ENCODE measurements at regions of chr7 and their contacts with region 1.

Region 1: GRCh38 chr7:100586266-100587025 is at the start of gene FBXO24:
- DNase-seq: peak; percentile 100
- ATAC-seq: peak; percentile 84
- H3K4me3 Mint-ChIP-seq: peak within 1 kb of the TSS; percentile 98
- H3K27ac Mint-ChIP-seq: peak within 1 kb of the TSS; percentile 97
- H3K4me1 Mint-ChIP-seq: peaks cover 23% of the 10 kb centered on the region
- H3K27me3 Mint-ChIP-seq: peaks cover 7% of the 10 kb centered on the region
- total RNA-seq, gene FBXO24: 0.80 to 1.3 TPM

Region 2: DNA sequence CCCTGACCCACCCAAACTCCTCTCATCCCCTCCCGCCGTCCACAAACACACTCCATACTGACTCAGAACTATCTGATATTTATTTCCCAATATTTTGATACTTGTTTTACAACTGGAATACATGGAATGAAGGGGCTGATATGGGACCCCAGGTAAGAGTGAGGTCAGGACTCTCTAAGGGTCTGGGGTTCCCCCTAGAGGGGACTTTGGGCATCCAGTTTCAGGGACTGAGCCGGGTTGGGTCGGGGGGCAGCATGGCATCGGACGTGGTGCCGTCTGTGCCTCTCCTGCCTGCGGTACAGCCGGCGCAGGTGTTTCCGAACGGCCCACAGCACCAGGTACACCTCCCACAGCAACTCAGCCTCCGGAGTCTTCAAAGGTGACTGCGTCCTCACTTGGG is 129.9 kb before region 1 on chr7:
- CTCF ChIA-PET with region 1: no interaction called
- DNase-seq: no peak
- ATAC-seq: no peak
- H3K4me3 Mint-ChIP-seq: no peak overlapping the region
- H3K27ac Mint-ChIP-seq: no peak overlapping the region
- H3K4me1 Mint-ChIP-seq: peaks cover 6% of the 10 kb centered on the region
- H3K27me3 Mint-ChIP-seq: no peaks in the 10 kb centered on the region

Region 3: DNA sequence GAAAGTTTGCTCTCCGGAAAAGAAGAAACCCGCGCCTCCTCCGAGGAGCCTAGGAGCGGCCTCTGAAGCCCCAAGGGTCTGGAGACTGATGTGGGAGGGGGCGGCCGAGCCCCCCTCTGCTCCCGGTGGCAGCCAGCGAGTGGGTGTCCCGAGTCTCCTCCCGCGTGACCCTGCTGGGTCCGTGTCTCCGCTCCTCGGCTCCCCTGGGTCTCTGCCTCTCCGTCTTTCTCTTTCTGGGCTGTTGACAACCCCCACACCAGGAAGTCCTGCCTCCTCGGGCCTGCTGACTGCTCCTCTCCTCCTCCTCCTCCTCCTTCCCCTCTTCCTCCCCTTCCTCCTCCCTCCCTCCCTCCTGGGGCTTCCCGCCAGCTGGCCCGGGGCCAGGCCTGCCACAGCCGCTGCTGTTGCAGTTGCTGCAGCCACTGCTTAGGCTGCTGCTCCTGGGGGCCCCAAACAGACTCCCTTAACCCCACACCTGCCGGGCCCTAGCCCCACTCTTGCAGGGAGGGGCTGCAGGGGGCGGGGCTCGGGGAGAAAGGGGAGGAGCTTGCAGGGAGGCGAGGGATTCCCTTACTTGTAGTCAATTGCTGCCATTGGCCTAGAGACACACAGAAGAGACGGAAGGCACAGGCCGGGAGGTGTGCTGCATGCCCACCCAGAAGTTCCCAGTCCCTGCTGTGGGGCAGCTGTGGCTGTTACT is 107.3 kb before region 1 on chr7 and contains the start of gene TSC22D4:
- CTCF ChIA-PET with region 1: interaction called, 16 read pairs
- DNase-seq: peak; percentile 97
- ATAC-seq: peak; percentile 81
- H3K4me3 Mint-ChIP-seq: peak within 1 kb of the TSS; percentile 95
- H3K27ac Mint-ChIP-seq: peak within 1 kb of the TSS; percentile 90
- H3K4me1 Mint-ChIP-seq: peaks cover 38% of the 10 kb centered on the region
- H3K27me3 Mint-ChIP-seq: no peaks in the 10 kb centered on the region
- total RNA-seq, gene TSC22D4: 128 to 144 TPM

Region 4: GRCh38 chr7:100563809-100564400 is 22.5 kb before region 1 on chr7:
- CTCF ChIA-PET with region 1: interaction called, 154 read pairs
- DNase-seq: peak; percentile 87
- ATAC-seq: peak; percentile 62
- H3K4me3 Mint-ChIP-seq: no peak overlapping the region
- H3K27ac Mint-ChIP-seq: peak overlapping the region; percentile 44
- H3K4me1 Mint-ChIP-seq: peaks cover 31% of the 10 kb centered on the region
- H3K27me3 Mint-ChIP-seq: no peaks in the 10 kb centered on the region

Region 5: GRCh38 chr7:100604028-100604975 is 17.9 kb after region 1 on chr7:
- CTCF ChIA-PET with region 1: interaction called, 20 read pairs
- DNase-seq: peak; percentile 91
- ATAC-seq: peak; percentile 78
- H3K4me3 Mint-ChIP-seq: peak overlapping the region; percentile 86
- H3K27ac Mint-ChIP-seq: peak overlapping the region; percentile 93
- H3K4me1 Mint-ChIP-seq: peaks cover 23% of the 10 kb centered on the region
- H3K27me3 Mint-ChIP-seq: peaks cover 5% of the 10 kb centered on the region

Region 6: DNA sequence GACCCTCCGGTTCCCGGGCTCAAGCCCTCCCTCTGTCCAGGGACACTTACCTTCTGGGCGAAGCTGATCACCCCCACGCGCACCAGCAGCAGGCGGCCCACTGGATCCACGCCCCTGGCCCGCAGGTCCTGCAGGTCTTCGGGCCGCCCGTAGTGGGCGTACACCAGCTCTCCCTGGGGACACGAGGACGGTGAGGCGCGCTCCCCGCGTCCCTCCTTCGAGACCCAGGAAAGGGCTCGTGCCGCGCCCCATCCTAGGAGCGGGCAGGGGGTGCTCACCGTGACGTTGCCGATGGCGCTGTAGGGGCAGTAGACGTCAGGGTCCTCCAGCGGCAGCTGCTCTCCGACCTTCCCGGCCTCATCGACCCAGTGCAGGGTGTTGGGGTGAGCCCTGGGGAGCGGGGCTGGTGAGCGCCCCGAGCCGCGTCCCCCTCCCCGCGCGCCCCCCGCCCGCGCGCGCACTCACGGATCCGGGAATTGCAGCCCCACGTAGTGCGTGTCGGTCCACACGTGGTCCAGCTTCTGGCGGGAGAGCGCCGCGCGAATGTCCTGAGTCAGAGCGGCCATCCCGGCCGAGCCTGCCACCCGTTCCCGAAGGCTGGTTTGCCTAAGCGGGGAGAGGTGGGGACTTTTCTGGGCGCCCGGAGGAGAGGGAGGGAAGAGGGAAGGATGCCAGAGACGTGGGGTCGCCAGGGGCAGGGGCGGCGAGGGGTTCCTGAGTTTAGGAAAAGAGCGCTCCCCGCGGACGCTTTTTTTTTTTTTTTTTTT is 46.7 kb after region 1 on chr7:
- CTCF ChIA-PET with region 1: interaction called, 13 read pairs
- DNase-seq: peak; percentile 79
- ATAC-seq: peak; percentile 82
- H3K4me3 Mint-ChIP-seq: peak overlapping the region; percentile 82
- H3K27ac Mint-ChIP-seq: peak overlapping the region; percentile 92
- H3K4me1 Mint-ChIP-seq: peaks cover 40% of the 10 kb centered on the region
- H3K27me3 Mint-ChIP-seq: no peaks in the 10 kb centered on the region